ENCODE measurements at regions of chr15 and their contacts with region 1.

Region 1: DNA sequence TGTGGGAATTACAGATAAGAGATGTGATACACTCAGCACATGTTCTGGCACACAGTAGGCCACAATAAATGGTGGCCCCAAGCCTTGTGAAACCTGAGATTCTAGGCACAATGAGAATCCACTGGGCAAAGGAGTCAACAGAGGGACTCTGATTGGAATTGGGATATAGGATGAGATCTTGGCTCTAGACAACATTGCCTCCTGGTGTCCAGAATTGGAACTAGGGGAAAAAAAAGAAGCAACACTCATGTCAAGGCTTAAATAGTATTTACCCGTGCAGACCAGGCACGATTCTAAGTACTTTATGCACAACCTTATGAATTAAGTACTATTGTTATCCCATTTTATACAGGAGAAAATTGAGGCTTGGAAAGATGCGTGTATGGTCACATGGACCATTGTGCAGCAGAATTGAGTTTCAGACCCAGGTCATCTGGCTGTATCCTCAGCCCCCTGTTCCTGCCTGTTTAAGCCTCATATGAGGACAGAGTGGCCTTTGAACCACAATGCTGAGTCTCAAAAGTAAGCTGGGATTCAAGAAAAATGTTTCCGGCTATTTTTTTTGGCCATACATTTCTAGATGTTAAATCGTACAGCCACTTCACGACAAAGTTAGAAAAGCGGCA is 124.8 kb downstream of the SV2B start:
- DNase-seq: no peak
- H3K4me3 ChIP-seq: no peak overlapping the region
- H3K27ac ChIP-seq: no peak overlapping the region
- H3K27me3 ChIP-seq: peaks cover 3% of the 10 kb centered on the region
- CTCF ChIP-seq: peak; percentile 74

Region 2: GRCh38 chr15:91055548-91056331 is 169.1 kb before region 1 on chr15:
- CTCF ChIA-PET with region 1: interaction called, 24 read pairs
- POLR2A ChIA-PET with region 1: no interaction called
- DNase-seq: peak; percentile 11
- H3K4me3 ChIP-seq: no peak overlapping the region
- H3K27ac ChIP-seq: no peak overlapping the region
- H3K27me3 ChIP-seq: peaks cover 12% of the 10 kb centered on the region
- CTCF ChIP-seq: peak; percentile 73

Measured in AG04450 (cell line).